ENCODE measurements at regions of chrX and their contacts with region 1.

Region 1: DNA sequence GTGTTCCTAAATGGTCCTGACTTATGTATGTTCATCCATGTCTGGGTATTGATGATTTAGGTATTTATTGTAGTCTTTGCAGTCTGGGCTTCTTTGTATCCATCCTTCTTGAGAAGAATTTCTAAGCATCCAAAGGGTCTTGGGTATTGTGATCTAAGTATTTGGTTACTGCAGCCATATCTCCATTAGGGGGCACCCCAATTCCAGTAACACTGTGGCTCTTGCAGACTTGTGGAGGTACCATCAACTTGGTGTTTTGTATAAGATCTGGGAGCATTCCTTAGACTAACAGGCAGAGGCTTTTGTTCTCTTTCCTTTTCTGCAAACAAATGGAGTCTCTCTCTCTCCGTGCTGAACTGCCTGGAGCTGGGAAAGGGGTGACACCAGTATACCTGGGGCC is 113.7 kb upstream of the NEXMIF start:
- DNase-seq: peak; percentile 8
- H3K4me3 Mint-ChIP-seq: no peak overlapping the region
- H3K27ac Mint-ChIP-seq: no peak overlapping the region
- H3K4me1 Mint-ChIP-seq: no peaks in the 10 kb centered on the region
- H3K27me3 Mint-ChIP-seq: peaks cover 38% of the 10 kb centered on the region
- CTCF ChIP-seq: no peak

Region 2: DNA sequence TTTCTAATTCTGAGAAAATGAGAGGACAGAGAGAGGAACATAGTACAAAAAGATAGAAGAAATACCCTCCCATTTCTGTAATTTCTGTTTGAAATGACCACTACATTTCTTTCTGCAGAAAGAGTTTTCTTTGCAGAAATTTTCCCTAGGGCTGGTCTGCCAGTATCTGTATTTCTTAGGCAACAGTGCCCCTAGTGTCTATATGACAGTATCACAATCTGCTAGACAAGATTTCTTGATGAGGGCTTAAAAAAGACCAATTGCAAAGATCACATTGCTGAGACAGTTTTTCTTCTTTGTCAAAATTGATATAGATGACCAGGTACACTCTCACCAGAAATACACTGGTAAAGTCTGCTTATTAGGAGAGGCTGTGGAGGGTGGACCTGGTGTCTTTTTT is 564.9 kb after region 1 on chrX:
- CTCF ChIA-PET with region 1: interaction called, 3 read pairs
- POLR2A ChIA-PET with region 1: no interaction called
- intact Hi-C with region 1: loop called (anchors 10 kb)
- DNase-seq: peak; percentile 41
- H3K4me3 Mint-ChIP-seq: no peak overlapping the region
- H3K27ac Mint-ChIP-seq: no peak overlapping the region
- H3K4me1 Mint-ChIP-seq: no peaks in the 10 kb centered on the region
- H3K27me3 Mint-ChIP-seq: peaks cover 10% of the 10 kb centered on the region
- CTCF ChIP-seq: peak; percentile 41

Measured in MCF 10A (cell line).